HCT116 (cell line): ENCODE measurements at regions of chr7 and their contacts with region 1.

Region 1: DNA sequence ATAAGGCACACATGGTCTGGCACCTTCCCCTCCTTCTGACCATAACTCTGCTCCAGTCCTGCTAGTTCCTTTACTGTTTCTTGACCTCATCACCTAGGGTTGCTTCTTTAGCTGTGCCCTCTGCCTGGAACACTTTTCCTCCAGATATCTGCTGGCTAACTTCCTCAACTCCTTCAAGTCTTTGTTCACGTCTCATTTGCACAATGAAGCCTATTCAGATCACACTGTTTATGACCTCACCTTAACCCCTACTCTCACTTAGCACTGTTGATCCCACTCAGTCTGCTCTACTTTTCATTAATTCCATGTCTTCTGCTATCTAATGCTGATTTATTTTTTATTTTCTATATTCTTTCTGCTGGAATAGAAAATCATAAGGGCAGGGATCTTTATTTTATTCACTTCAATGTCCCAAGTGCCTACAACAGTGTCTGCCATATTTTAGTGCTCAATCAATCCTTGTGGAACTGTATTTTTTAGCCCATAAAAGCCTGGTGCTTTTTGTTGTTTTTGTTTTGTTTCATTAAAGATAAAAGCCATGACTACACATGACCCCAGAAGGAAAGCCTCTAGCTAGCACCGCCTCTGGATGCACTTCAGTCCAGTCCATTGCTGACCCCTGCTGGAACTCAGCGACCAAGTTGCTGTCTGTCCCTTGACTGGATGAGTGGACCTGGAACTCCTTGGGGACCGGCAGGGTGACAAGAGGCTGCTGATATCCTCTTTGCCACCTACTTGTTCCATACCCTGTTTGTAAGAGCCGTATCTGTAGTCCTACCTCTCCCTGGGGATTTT is 12.3 kb downstream of the KLF14 start:
- DNase-seq: peak; percentile 70
- ATAC-seq: peak; percentile 100
- H3K4me3 ChIP-seq: no peak overlapping the region
- H3K27ac ChIP-seq: no peak overlapping the region
- H3K4me1 ChIP-seq: no peaks in the 10 kb centered on the region
- H3K27me3 ChIP-seq: no peaks in the 10 kb centered on the region
- CTCF ChIP-seq: peak; percentile 68 to 81 (median 70)
- POLR2A ChIP-seq: no peak
- RAD21 ChIP-seq: peak; percentile 95

Region 2: GRCh38 chr7:130063036-130063435 is 658.6 kb before region 1 on chr7:
- CTCF ChIA-PET with region 1: no interaction called
- POLR2A ChIA-PET with region 1: no interaction called
- RAD21 ChIA-PET with region 1: no interaction called
- intact Hi-C with region 1: loop called (anchors 1 kb)
- DNase-seq: no peak
- ATAC-seq: peak; percentile 86
- H3K4me3 ChIP-seq: no peak overlapping the region
- H3K27ac ChIP-seq: no peak overlapping the region
- H3K4me1 ChIP-seq: peaks cover 0 to 3% of the 10 kb centered on the region in 2 experiments; a peak in 1 of 4 replicates
- H3K27me3 ChIP-seq: no peaks in the 10 kb centered on the region
- CTCF ChIP-seq: peak; percentile 61 to 93 (median 91); a peak in 5 of 6 replicates
- POLR2A ChIP-seq: no peak
- RAD21 ChIP-seq: peak; percentile 74

Region 3: DNA sequence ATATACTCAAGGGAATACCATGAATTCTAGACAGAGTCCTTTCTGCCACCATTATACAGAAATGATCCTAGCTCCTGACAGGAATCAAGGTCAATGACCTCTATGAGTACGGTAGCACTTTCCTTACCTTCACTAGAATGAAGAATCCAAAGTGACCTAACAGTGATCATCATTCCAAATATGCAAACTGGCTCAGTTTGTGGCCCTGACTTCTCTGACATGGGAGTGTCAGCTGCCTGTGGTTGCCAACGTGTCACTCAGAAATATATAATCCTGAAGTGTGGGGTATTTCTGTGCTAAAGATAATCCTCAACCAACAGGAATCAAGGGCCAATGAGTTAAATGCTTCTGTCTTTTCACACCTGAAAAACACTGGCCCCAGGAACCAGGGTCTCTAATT is 98.8 kb before region 1 on chr7:
- CTCF ChIA-PET with region 1: no interaction called
- POLR2A ChIA-PET with region 1: no interaction called
- RAD21 ChIA-PET with region 1: no interaction called
- intact Hi-C with region 1: no loop called
- DNase-seq: no peak
- ATAC-seq: no peak
- H3K4me3 ChIP-seq: no peak overlapping the region
- H3K27ac ChIP-seq: no peak overlapping the region
- H3K4me1 ChIP-seq: no peaks in the 10 kb centered on the region
- H3K27me3 ChIP-seq: no peaks in the 10 kb centered on the region
- CTCF ChIP-seq: no peak
- POLR2A ChIP-seq: no peak
- RAD21 ChIP-seq: no peak

Region 4: GRCh38 chr7:130831817-130832481 is 110.3 kb after region 1 on chr7:
- CTCF ChIA-PET with region 1: no interaction called
- POLR2A ChIA-PET with region 1: no interaction called
- RAD21 ChIA-PET with region 1: no interaction called
- intact Hi-C with region 1: loop called (anchors 2 kb)
- DNase-seq: peak; percentile 41
- ATAC-seq: 0 out of 2 replicates have a peak, but pooled peaks have one; percentile 47
- H3K4me3 ChIP-seq: no peak overlapping the region
- H3K27ac ChIP-seq: peak overlapping the region; percentile 2; the same call in 1 of the 2 replicates
- H3K4me1 ChIP-seq: peaks cover 0 to 19% of the 10 kb centered on the region in 2 experiments; a peak in 2 of 4 replicates
- H3K27me3 ChIP-seq: no peaks in the 10 kb centered on the region
- CTCF ChIP-seq: peak; percentile 60 to 84 (median 66); a peak in 5 of 6 replicates
- POLR2A ChIP-seq: no peak
- RAD21 ChIP-seq: peak; percentile 87

Region 5: GRCh38 chr7:131139462-131139861 is 417.8 kb after region 1 on chr7:
- CTCF ChIA-PET with region 1: no interaction called
- POLR2A ChIA-PET with region 1: no interaction called
- RAD21 ChIA-PET with region 1: no interaction called
- intact Hi-C with region 1: no loop called
- DNase-seq: no peak
- ATAC-seq: no peak
- H3K4me3 ChIP-seq: no peak overlapping the region
- H3K27ac ChIP-seq: no peak overlapping the region
- H3K4me1 ChIP-seq: peaks cover 6 to 7% of the 10 kb centered on the region in 2 experiments; a peak in 3 of 4 replicates
- H3K27me3 ChIP-seq: no peaks in the 10 kb centered on the region
- CTCF ChIP-seq: no peak
- POLR2A ChIP-seq: no peak
- RAD21 ChIP-seq: no peak